ENCODE measurements at regions of chrX and their contacts with region 1.

Region 1: DNA sequence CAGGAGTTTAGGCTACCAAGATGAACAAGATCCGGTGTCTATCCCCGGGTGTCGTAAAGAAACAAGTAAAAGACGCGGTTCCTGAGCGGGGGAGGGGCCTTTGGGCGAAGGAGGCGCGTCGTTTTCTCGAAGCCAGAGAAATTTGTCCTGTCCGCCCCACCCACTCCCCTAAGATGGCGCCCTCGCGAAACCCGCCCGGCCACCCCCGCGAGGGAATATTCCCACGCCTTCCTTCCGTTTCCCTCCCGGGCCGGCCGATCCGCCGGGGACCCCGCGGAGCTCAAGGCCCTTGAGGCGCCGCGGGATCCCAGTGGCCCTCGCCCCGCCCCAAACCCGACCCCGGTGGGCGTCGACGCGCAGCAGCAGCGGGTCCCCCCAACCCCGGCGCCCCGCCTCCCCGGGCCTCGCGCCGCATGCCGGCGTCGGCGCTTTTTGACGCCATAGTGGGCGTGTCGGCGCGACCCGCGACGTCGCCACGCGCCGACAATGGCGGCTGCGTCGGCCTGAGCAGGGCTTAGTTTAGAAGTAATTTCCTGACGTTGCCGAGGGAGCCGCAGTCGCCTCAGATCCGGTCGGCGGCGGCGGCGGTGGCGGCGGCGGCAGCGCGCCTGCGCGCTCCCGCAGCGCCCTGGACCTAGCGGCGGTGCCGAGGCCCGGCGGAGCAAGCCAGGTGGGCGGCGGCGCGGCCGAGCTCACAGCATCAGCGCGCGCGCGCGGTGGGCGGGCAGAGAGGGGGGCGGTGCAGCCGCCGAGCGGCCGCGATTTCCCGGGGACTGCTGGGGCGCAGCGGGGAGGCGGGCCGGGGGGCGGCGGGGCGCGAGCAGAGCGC is at the start of gene HTATSF1:
- DNase-seq: peak; percentile 95
- H3K4me3 Mint-ChIP-seq: peak within 1 kb of the TSS; percentile 94
- H3K27ac Mint-ChIP-seq: peak within 1 kb of the TSS; percentile 94
- H3K4me1 Mint-ChIP-seq: peaks cover 18% of the 10 kb centered on the region
- H3K27me3 Mint-ChIP-seq: peaks cover 4% of the 10 kb centered on the region
- total RNA-seq, gene HTATSF1: 49.4 and 55.1 TPM in 2 replicates

Region 2: DNA sequence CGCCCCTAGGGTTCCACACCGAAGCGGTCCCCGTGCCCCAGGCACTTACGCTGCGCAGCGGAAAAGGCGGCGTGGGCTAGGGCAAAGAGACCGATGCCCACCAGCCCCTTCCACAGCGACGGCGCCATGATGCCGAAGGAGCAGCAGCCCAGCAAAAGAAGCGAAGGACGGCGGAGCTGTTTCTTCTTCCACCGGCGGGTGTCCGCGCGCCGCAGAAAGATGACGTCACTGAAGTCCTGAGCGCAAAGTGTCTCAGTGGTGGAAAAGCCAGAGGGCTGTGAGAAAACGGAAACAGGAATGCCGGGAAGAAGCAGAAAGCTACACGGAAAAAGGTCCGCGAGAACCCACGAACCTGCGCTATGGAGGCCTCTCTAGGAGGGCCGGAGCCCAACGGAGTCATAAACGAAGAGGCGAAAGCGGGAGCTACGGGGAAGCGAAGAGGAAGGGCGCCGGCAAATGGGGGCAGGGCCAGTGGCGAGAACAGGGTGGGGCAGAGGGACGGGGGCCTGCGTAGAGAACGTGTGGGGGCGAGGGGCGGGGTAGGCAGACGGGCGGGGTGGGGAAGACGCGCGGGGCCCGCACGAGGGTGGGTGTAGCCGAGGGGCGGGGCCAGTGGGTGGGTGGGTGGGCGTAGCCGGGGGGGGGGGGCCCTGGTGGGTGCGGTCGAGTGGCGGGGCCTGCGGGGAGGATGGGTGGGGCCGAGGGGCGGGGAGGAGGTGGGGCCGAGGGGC is 523.3 kb before region 1 on chrX and contains the start of gene MMGT1:
- intact Hi-C with region 1: loop called (anchors 1 kb)
- DNase-seq: peak; percentile 93
- H3K4me3 Mint-ChIP-seq: peak within 1 kb of the TSS; percentile 100
- H3K27ac Mint-ChIP-seq: peak within 1 kb of the TSS; percentile 99
- H3K4me1 Mint-ChIP-seq: peaks cover 28% of the 10 kb centered on the region
- H3K27me3 Mint-ChIP-seq: peaks cover 3% of the 10 kb centered on the region
- total RNA-seq, gene MMGT1: 27.1 and 27.4 TPM in 2 replicates

Region 3: DNA sequence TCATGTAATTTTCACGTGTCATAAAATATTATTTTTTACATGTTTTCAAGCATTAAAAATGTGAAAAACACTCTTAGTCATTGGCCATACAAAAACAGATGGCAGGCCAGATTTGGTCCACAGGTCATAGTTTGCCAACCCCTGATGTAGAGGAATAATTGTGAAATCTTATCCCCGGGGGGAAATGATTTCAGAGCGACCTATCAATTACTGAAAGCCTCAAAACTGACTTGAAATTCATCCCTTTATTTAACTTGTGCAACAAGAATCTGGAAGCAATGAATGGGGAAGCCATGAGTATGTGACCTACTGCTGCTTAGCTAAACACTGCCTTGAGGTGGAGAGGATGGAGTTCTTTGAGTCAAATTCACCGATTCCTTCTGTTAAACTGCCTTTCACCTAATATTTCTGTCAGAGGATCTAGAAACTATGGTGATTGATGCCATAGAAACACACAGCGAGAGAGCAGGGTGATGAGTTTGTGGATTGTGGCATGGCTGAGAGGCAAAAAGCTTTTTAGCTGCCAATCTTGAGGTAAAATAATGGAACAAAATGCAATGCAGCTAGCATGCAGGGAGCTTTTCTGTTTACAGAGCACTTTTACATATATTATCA is 39.6 kb before region 1 on chrX:
- intact Hi-C with region 1: no loop called
- DNase-seq: no peak
- H3K4me3 Mint-ChIP-seq: no peak overlapping the region
- H3K27ac Mint-ChIP-seq: no peak overlapping the region
- H3K4me1 Mint-ChIP-seq: no peaks in the 10 kb centered on the region
- H3K27me3 Mint-ChIP-seq: peaks cover 7% of the 10 kb centered on the region

Region 4: DNA sequence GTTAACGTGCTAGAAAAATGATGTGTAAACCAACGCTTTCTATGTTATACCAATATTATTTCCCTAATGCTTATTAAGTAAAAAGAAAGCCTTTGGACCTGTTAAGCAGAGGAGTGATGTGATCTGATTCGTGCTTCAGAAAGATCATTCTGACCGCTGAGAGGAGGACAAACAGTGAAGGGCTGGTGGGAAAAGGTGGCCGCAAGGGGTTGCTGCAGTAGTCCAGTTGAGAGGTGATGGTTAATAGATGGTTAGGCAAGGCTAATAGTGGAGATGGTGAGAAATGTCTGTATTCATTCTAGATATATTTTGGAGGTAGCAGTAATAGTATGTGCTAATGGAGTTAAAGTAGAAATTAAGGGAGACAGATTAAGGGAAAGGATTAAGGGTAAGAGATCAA is 22.1 kb after region 1 on chrX:
- intact Hi-C with region 1: no loop called
- DNase-seq: no peak
- H3K4me3 Mint-ChIP-seq: no peak overlapping the region
- H3K27ac Mint-ChIP-seq: no peak overlapping the region
- H3K4me1 Mint-ChIP-seq: peaks cover 4% of the 10 kb centered on the region
- H3K27me3 Mint-ChIP-seq: no peaks in the 10 kb centered on the region

Region 5: GRCh38 chrX:136577552-136577951 is 80.6 kb after region 1 on chrX:
- intact Hi-C with region 1: loop called (anchors 2 kb)
- DNase-seq: peak; percentile 90
- H3K4me3 Mint-ChIP-seq: peak overlapping the region; percentile 59
- H3K27ac Mint-ChIP-seq: peak overlapping the region; percentile 81
- H3K4me1 Mint-ChIP-seq: peaks cover 25% of the 10 kb centered on the region
- H3K27me3 Mint-ChIP-seq: no peaks in the 10 kb centered on the region

Region 6: GRCh38 chrX:136616987-136617685 is 120.2 kb after region 1 on chrX:
- intact Hi-C with region 1: loop called (anchors 5 kb)
- DNase-seq: peak; percentile 77
- H3K4me3 Mint-ChIP-seq: peak overlapping the region; percentile 41
- H3K27ac Mint-ChIP-seq: peak overlapping the region; percentile 88
- H3K4me1 Mint-ChIP-seq: peaks cover 46% of the 10 kb centered on the region
- H3K27me3 Mint-ChIP-seq: no peaks in the 10 kb centered on the region

Region 7: DNA sequence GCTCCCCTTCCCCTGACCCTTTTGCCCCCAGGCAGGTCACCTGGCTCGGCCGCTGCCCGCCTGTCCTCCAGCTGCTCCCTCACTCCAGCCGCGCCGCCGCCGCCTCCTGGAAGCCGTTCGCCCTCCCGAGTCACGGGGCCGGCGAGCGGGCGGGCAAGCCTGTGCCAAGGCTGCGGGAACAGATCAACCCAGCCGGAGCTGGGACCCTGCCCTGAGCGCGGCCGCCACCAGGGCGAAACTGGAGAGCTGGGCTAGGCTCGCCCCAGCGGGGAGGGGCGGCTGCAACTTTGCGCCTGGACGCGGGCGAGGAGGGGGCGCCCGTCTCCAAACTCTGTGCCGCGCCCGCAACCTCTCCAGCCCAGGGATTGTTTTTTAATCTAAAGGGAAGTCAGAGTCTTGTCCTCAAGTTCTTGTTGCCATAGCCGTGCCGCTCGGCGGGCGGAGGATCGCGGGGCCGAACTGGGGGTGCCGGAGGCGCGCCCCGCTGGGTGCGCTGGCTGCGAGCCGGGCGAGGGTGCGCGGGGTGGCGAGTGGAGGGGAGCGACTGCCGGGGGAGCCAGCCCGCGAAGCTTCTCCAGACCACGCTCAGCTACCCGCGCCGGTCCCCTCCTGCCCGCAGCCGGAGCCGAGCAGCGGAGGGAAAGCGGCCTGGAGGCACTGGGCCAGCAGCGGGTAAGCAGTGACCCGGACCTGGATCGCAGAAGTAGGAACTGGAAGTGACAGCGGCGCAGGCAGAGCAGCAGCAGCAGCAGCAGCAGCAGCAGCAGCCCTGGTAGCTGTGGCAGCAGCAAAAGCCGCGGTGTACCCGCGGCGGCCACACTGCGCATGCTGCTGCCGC is 270.3 kb after region 1 on chrX:
- intact Hi-C with region 1: loop called (anchors 2 kb)
- DNase-seq: peak; percentile 81
- H3K4me3 Mint-ChIP-seq: peak overlapping the region; percentile 83
- H3K27ac Mint-ChIP-seq: peak overlapping the region; percentile 95
- H3K4me1 Mint-ChIP-seq: peaks cover 50% of the 10 kb centered on the region
- H3K27me3 Mint-ChIP-seq: no peaks in the 10 kb centered on the region

Region 8: DNA sequence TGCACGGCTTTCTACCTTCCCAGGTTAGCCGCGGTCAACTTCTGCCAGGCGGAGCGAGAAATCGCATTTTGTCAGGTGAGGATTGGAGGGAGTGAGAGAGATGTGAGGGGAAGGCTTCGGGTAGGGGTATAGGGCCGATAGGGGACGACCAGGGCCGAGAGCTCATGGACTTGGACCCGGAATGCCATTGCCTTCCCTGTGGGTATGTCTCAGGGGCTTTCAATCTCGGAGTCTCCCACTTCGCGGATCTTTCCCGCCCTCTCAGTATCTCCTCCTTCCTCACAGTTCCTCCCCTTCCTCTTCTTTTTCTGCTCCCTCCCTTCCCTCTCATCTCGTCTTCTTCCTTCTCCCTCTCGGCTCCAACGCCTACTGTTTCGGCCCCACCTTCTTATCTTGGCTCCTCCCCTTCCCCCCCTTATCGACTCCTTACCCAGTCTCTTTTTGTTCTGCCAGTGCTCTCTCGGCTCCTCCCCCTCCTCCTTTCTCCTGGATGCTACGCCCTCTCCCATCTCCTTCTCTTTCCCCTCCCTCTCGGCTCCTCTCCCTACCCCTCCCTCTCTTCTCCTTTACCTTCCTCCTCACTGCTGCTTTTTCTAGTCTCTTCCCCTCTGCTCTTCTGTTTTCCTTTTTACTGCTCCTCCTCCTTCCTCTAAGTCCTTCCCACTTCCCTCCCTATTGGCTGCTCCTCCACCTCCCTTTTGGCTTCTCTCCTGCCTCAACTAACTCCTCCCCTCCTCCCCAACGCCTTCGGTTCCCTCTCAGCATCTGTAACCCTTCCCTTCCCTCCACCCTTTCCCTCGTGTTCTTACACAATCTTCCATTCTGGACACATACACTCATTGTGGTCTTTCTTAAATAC is 413.0 kb after region 1 on chrX:
- intact Hi-C with region 1: loop called (anchors 10 kb)
- DNase-seq: peak; percentile 89
- H3K4me3 Mint-ChIP-seq: peak overlapping the region; percentile 96
- H3K27ac Mint-ChIP-seq: peak overlapping the region; percentile 94
- H3K4me1 Mint-ChIP-seq: peaks cover 13% of the 10 kb centered on the region
- H3K27me3 Mint-ChIP-seq: no peaks in the 10 kb centered on the region

Region 9: DNA sequence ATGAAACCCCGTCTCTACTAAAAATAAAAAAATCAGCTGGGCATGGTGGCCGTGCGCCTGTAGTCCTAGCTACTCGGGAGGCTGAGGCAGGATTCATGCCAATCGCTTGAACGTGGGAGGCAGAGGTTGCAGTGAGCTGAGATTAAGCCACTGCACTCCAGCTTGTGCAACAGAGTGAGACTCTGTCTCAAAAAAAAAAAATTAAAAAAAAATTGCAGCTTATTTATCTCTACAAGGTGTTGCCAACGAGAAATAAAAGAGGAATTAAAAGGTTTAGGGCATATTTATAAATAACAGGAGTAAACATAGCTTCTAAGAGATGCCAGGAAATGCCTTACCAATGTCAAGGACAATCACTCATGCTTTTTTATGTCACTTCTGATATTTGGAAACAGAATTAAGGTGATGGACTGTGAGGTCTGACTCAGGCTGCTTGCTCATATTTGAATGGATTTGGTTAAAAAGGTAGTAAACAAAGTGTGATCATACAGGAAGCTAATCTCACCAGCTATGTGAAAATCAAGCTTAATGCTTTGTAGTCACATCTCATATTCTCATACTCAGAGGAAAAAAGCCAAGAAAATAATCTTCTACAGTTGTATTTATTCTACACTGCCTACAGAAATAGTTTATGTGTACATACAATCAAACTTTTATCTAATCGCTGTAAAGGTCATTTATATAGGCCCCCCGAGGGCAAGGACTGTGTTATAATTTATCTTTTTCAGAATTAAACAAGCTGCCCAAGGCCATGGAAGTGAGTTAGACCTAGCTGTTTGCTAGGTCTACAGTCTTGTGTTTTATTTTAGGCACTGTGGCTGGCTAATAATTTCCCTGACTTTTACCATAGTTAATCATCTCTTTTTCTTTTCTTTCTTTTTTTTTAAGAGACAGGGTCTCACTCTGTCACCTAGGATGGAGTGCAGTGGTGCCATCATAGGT is 444.7 kb after region 1 on chrX:
- intact Hi-C with region 1: no loop called
- DNase-seq: no peak
- H3K4me3 Mint-ChIP-seq: no peak overlapping the region
- H3K27ac Mint-ChIP-seq: no peak overlapping the region
- H3K4me1 Mint-ChIP-seq: peaks cover 4% of the 10 kb centered on the region
- H3K27me3 Mint-ChIP-seq: no peaks in the 10 kb centered on the region